ENCODE measurements at regions of chr15 and their contacts with region 1.

Region 1: GRCh38 chr15:75371486-75371885 is 3.1 kb upstream of the MAN2C1 start:
- DNase-seq: no peak
- H3K4me3 ChIP-seq: no peak overlapping the region
- H3K27ac ChIP-seq: no peak overlapping the region
- H3K4me1 ChIP-seq: peaks cover 16 to 34% (median 24%) of the 10 kb centered on the region in 6 donors
- H3K27me3 ChIP-seq: no peaks in the 10 kb centered on the region
- CTCF ChIP-seq: no peak
- POLR2A ChIP-seq: no peak

Region 2: DNA sequence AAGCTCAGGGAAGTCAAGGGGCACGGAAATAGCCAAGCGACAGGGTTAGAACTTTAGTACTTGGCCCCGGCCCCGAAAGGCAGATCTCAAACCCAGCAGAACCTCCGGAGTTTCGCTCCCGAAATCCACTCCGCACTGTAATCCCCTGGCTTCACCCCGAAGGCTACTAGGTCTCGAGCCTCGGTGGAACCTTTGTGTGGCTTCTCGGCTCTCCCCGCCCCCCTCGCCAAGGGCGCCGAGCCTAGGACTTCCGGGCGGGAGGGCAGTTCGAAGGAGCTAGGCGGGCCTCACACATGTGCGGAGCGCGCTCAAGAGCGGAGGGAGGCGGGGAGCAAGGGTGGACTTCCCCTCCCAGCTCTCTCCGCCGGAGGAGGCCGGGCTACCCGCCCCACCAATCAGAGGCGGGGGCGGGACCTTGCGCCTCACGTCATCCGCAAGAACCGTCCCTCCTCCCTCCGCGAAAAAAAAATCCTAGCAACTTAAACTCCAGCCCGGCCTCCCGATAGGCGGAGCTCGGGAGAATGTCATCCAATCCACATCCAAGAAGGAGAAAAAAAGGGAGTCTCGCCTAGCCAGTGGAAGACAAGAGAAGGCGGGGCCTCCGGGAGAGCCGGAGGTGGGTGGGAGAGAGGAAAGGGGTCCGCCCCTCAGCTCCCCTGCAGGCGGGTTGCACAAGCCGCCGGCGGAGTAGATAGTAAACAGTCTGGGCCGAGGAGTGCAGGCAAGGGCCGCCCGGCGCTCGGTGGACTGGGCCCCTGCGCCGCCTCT is 82.4 kb after region 1 on chr15:
- intact Hi-C with region 1: loop called (anchors 10 kb)
- DNase-seq: peak; percentile 99
- H3K4me3 ChIP-seq: peak overlapping the region; percentile 87 to 99 (median 92)
- H3K27ac ChIP-seq: peak overlapping the region; percentile 95 to 99 (median 98)
- H3K4me1 ChIP-seq: peaks cover 9 to 53% (median 39%) of the 10 kb centered on the region in 6 donors
- H3K27me3 ChIP-seq: no peaks in the 10 kb centered on the region
- CTCF ChIP-seq: peak in 4 of 11 experiments; percentile 10 to 27 (median 24)
- POLR2A ChIP-seq: peak; percentile 39 to 59 (median 57)

Region 3: GRCh38 chr15:75625542-75626347 is 254.3 kb after region 1 on chr15 and contains the start of gene SNUPN:
- intact Hi-C with region 1: loop called (anchors 10 kb)
- DNase-seq: peak; percentile 98
- H3K4me3 ChIP-seq: peak within 1 kb of the TSS; percentile 74 to 98 (median 90)
- H3K27ac ChIP-seq: peak within 1 kb of the TSS; percentile 92 to 97 (median 96)
- H3K4me1 ChIP-seq: peaks cover 1 to 61% (median 25%) of the 10 kb centered on the region in 6 donors
- H3K27me3 ChIP-seq: no peaks in the 10 kb centered on the region
- CTCF ChIP-seq: peak in 1 of 11 experiments; percentile 25
- POLR2A ChIP-seq: peak in 2 of 3 donors; percentile 33 to 40
- total RNA-seq, gene SNUPN: 16.9 to 26.3 (median 22.8) TPM